ENCODE measurements at regions of chr3 and their contacts with region 1.

Region 1: DNA sequence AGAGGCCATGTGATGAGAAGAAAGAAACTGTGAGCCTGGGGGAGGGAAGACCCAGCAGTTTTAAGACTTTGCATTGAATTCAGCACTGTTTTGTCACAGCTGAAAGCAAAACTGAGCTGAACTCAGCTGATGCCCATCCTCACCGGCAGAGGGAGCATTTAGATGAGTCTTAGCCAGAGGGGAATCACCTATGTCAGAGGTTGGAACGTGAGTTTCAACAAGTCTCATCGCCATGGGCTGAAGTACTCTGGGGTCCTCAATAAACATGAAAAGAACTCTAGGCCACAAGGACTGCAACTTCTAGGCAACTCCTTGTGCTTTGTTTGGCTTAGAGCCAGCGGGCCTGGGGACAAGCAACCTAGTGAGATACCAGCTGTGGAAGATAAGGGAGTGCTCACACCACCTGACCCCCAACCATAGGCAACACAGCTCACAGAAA is 324.5 kb downstream of the TBL1XR1 start:
- DNase-seq: peak; percentile 55
- H3K4me3 Mint-ChIP-seq: no peak overlapping the region
- H3K27ac Mint-ChIP-seq: no peak overlapping the region
- H3K4me1 Mint-ChIP-seq: peaks cover 3% of the 10 kb centered on the region
- H3K27me3 Mint-ChIP-seq: no peaks in the 10 kb centered on the region

Region 2: GRCh38 chr3:176896640-176897039 is 23.9 kb after region 1 on chr3:
- CTCF ChIA-PET with region 1: no interaction called
- POLR2A ChIA-PET with region 1: no interaction called
- DNase-seq: no peak
- H3K4me3 Mint-ChIP-seq: no peak overlapping the region
- H3K27ac Mint-ChIP-seq: no peak overlapping the region
- H3K4me1 Mint-ChIP-seq: no peaks in the 10 kb centered on the region
- H3K27me3 Mint-ChIP-seq: peaks cover 5% of the 10 kb centered on the region

Region 3: DNA sequence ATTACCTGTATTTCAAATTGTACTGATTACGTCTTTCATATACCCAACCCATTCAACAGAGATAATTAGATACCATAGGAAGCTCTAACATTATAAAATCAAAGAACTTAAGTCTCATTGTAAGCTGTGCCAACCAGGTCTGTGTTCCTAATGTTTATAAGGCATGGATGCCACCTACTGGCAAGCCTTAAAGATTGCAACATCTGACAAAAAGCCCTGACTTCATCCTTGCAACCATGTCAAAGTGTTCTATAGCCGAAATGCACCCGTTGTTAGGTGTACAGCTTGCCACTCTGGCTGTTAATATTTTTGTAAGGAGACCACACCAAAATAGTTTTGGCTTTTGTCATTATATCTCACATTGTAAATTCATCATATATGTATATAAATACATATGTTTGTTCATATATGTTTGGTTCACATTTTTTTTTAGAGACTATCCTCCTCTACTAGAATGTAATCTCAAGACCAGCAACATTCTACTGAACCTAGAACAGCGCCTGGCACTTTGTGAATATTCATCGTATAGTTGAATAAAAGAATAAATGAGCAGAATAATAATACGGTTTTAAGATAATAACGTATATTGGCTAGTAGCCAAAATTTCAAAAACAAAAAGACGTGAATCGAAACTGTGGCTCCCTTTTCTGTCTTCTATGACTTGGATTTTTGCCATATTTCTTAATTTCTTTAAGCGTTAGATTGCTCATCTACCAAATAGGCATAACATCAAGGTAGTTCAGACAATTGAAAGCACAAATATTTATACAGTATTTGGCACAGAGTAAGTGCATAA is 66.4 kb after region 1 on chr3:
- CTCF ChIA-PET with region 1: interaction called, 41 read pairs
- POLR2A ChIA-PET with region 1: no interaction called
- DNase-seq: peak; percentile 27
- H3K4me3 Mint-ChIP-seq: no peak overlapping the region
- H3K27ac Mint-ChIP-seq: no peak overlapping the region
- H3K4me1 Mint-ChIP-seq: peaks cover 7% of the 10 kb centered on the region
- H3K27me3 Mint-ChIP-seq: peaks cover 7% of the 10 kb centered on the region